ENCODE measurements at regions of chr7 and their contacts with region 1.

Region 1: GRCh38 chr7:134113655-134114054 is 13.5 kb upstream of the LRGUK start:
- DNase-seq: no peak
- ATAC-seq: no peak
- H3K4me3 ChIP-seq: no peak overlapping the region
- H3K27ac ChIP-seq: no peak overlapping the region
- H3K4me1 ChIP-seq: no peaks in the 10 kb centered on the region
- H3K27me3 ChIP-seq: no peaks in the 10 kb centered on the region
- CTCF ChIP-seq: no peak
- POLR2A ChIP-seq: no peak

Region 2: DNA sequence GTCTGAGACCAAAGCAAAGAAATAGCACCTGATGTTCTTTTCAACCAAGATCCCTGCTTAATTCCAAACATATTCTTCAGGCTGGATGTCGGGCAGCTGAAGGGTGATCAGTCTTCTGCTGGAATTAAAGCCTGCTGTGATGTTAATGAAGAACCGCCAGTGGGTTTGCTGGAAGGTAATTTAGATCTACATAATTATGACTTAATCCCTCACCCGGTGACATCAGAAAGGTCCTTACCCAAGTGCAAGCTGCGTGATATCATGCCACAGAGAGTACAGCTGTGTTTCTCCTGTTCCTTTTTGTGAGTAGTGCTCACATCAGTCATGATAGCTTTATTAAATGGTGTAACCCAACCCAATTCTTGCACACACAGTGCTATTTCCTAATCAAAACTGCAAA is 15.6 kb before region 1 on chr7:
- intact Hi-C with region 1: loop called in 1 of 10 experiments (anchors 2 kb)
- DNase-seq: no peak
- ATAC-seq: no peak
- H3K4me3 ChIP-seq: no peak overlapping the region
- H3K27ac ChIP-seq: no peak overlapping the region
- H3K4me1 ChIP-seq: no peaks in the 10 kb centered on the region
- H3K27me3 ChIP-seq: no peaks in the 10 kb centered on the region
- CTCF ChIP-seq: no peak
- POLR2A ChIP-seq: no peak

Region 3: DNA sequence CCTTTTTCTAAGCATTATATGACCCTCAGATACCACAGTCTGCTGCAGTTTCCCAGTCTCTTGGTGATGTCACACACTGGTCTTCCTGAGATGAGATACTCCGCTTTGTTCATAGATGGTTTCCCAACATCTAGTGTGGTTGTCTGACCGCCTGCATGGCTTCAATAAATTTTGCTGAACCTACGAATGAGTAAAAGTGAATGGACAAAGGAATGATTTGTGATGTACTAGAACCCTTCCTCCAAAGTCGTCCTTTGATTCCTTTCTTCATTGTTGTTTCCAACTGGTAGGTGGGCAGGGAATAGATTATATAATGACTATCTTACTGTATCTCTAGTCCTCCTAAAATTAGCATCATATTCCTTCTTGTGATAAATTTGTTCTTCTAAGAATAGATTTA is 120.6 kb after region 1 on chr7:
- intact Hi-C with region 1: no loop called
- DNase-seq: no peak
- ATAC-seq: no peak
- H3K4me3 ChIP-seq: no peak overlapping the region
- H3K27ac ChIP-seq: no peak overlapping the region
- H3K4me1 ChIP-seq: no peaks in the 10 kb centered on the region
- H3K27me3 ChIP-seq: peaks cover 0 to 3% (median 0%) of the 10 kb centered on the region in 9 donors
- CTCF ChIP-seq: no peak
- POLR2A ChIP-seq: no peak